A673 (cell line): ENCODE measurements at regions of chr2 and their contacts with region 1.

Region 1: DNA sequence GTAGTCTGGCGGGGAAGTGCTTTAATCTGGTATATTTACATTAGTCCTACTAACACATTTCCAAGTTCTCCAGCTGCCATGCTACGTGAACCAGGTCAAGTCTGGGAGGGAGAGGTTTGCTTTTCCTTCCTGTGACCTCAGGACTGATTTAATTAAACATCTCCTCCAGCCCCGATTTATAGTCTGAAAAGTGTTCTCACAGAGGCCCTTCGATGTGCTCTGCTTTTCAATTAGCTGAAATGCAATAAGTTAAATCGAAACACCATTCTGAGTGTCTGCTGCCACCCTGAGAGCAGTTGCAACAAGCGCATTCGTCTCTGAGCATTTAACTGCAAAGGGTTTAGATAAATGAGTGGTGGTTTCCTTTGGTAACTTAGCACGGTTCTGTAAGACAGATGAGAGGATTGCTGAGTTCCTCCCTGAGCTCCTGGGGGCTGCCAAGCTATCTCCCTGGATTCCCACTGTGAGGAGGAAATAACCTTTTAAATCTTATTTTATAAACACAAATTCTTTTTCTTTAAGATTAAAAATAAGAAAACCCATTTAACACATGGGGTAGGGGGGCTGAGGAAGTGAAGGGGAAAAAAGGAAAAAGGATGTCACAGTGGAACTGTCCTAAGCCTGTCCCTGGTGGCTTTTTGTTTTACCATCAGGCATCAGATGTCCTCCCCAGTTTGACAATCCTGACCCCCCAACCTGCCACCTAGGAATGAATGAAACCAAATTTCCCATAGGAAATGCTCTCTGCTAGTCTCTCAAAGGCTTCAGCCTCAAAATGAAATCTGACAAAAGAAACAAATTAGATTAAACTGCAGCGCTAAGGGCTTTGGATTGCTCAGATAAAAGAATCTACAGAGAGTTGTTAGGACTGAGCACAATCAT is 56.5 kb upstream of the CREB1 start:
- DNase-seq: peak; percentile 93
- H3K4me3 ChIP-seq: no peak overlapping the region
- H3K27ac ChIP-seq: no peak overlapping the region
- H3K4me1 ChIP-seq: peaks cover 21% of the 10 kb centered on the region
- H3K27me3 ChIP-seq: peaks cover 38% of the 10 kb centered on the region
- CTCF ChIP-seq: peak; percentile 77

Region 2: GRCh38 chr2:206556357-206556949 is 916.8 kb before region 1 on chr2:
- CTCF ChIA-PET with region 1: no interaction called
- POLR2A ChIA-PET with region 1: no interaction called
- intact Hi-C with region 1: loop called (anchors 10 kb)
- DNase-seq: peak; percentile 51
- H3K4me3 ChIP-seq: no peak overlapping the region
- H3K27ac ChIP-seq: no peak overlapping the region
- H3K4me1 ChIP-seq: no peaks in the 10 kb centered on the region
- H3K27me3 ChIP-seq: peaks cover 21% of the 10 kb centered on the region
- CTCF ChIP-seq: peak; percentile 73

Region 3: DNA sequence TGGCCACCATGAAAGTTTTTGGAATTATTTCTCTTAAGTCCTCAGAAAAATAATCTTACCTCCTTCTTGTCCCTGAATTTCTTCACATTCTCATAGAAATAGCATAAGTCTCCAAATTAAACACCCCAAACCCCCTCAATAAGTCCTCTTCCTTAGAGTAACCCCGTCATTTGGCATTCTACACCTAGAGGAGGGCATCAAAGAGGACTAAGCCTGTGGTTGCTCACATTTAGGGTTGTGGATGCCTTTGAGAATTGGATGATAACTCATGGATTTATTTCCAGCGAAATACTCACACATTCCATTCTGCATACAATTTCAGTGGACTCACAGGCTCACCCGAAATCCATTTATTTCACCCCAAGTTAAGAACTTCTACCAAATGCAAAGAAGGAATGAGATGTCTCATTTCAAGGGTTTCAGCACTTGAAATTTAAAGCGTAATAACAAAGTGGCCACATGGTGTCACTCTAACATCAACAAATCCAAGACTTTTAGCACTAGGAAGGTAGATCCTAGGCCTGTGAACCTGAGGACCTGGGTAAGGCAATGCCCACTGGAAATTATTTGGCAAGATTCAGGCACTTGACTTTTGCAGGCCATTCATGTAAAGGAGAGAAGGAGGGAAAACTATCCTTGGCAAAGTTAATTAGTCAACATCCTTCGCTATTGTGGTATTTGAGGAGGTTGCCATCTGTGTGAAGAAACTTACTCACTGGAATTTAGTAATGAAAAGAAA is 779.7 kb before region 1 on chr2:
- CTCF ChIA-PET with region 1: no interaction called
- POLR2A ChIA-PET with region 1: no interaction called
- intact Hi-C with region 1: loop called (anchors 1 kb)
- DNase-seq: peak; percentile 69
- H3K4me3 ChIP-seq: no peak overlapping the region
- H3K27ac ChIP-seq: no peak overlapping the region
- H3K4me1 ChIP-seq: no peaks in the 10 kb centered on the region
- H3K27me3 ChIP-seq: peaks cover 22% of the 10 kb centered on the region
- CTCF ChIP-seq: peak; percentile 71

Region 4: DNA sequence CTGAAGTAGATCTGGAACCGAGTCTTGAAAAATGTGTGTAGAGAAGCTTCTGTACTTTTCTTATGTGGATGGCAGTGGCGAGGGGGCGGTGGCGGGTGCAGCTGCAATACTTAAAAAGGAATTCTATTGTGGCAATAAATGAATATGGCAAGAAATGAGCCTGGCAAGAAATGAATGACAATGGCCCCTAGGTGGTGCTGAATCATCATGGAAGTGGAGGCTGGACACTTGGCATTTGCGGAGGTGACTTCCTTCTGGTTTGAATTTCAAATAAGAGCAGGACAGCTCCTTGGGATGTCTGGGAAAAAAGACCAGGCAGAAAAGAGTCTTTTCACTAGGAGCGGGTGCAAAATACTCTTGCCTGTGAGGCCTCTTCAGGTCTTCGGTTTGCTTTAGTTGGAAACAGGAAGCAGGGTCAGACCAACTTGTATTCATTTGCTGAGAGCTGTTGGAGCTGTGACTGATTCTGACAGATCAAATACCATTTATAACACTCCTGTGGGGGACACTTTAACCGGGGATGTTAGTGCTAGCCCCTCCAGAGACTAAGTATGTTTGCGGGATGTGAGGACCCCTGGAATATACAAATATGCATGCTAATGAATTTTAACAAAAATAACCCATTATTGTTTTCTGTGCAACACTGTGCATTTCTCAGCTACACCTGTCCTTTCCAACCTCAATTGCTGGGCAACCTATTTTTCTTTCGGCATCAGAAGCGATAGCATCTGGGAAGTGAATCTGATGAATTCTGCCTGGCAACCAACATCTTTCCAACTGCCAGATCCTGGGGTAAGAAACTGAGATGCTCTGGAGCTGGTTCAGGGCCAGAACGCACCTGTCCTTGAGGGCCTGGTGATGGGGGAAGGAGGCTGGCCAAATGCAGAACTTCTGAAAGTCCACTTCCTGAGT is 672.5 kb before region 1 on chr2:
- CTCF ChIA-PET with region 1: interaction called, 4 read pairs
- POLR2A ChIA-PET with region 1: no interaction called
- intact Hi-C with region 1: loop called (anchors 1 kb)
- DNase-seq: peak; percentile 80
- H3K4me3 ChIP-seq: no peak overlapping the region
- H3K27ac ChIP-seq: no peak overlapping the region
- H3K4me1 ChIP-seq: no peaks in the 10 kb centered on the region
- H3K27me3 ChIP-seq: no peaks in the 10 kb centered on the region
- CTCF ChIP-seq: peak; percentile 74

Region 5: GRCh38 chr2:206981739-206982340 is 491.4 kb before region 1 on chr2:
- CTCF ChIA-PET with region 1: interaction called, 3 read pairs
- POLR2A ChIA-PET with region 1: no interaction called
- intact Hi-C with region 1: loop called (anchors 1 kb)
- DNase-seq: peak; percentile 65
- H3K4me3 ChIP-seq: no peak overlapping the region
- H3K27ac ChIP-seq: no peak overlapping the region
- H3K4me1 ChIP-seq: no peaks in the 10 kb centered on the region
- H3K27me3 ChIP-seq: peaks cover 38% of the 10 kb centered on the region
- CTCF ChIP-seq: peak; percentile 71

Region 6: GRCh38 chr2:207046724-207047123 is 426.6 kb before region 1 on chr2:
- CTCF ChIA-PET with region 1: interaction called, 3 read pairs
- POLR2A ChIA-PET with region 1: no interaction called
- intact Hi-C with region 1: loop called (anchors 2 kb)
- DNase-seq: peak; percentile 88
- H3K4me3 ChIP-seq: no peak overlapping the region
- H3K27ac ChIP-seq: no peak overlapping the region
- H3K4me1 ChIP-seq: peaks cover 12% of the 10 kb centered on the region
- H3K27me3 ChIP-seq: no peaks in the 10 kb centered on the region
- CTCF ChIP-seq: peak; percentile 62

Region 7: DNA sequence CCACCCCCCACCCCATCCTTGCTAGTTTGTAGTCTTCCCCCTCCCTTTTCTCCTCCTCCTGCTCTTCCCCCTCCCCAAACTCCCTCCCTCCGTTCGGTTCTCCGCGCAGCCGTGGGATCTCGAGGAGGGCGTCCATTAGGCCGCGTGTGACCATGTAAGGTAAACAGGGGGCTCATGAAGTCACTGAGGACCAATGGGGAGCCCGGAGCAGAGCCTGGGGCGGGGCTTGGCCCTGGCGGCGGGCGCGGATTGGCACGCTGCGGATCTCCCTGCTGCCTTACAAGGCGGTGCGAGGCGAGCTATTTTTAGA is 307.3 kb before region 1 on chr2:
- CTCF ChIA-PET with region 1: interaction called, 3 read pairs
- POLR2A ChIA-PET with region 1: no interaction called
- intact Hi-C with region 1: loop called (anchors 5 kb)
- DNase-seq: peak; percentile 99
- H3K4me3 ChIP-seq: peak overlapping the region; percentile 83
- H3K27ac ChIP-seq: peak overlapping the region; percentile 100
- H3K4me1 ChIP-seq: peaks cover 20% of the 10 kb centered on the region
- H3K27me3 ChIP-seq: no peaks in the 10 kb centered on the region
- CTCF ChIP-seq: no peak

Region 8: DNA sequence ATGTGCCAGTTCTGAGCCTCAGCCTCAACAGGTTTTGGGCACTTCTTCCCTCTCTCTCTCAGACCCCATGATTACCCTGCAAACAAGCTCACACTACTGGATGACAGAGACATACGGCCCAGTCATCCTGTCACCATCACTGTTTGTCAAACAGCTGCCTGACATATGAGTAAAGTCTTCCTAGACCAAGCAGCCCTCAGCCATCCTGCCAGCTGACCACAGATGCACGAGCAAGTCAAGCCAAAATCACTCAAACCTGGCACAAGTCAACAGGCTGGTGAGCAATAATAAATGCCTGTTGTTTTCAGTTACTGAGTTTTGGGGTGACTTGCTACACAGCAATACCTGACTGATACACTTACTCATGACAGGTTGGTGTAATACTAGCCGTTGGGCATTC is 232.1 kb before region 1 on chr2:
- CTCF ChIA-PET with region 1: no interaction called
- POLR2A ChIA-PET with region 1: no interaction called
- intact Hi-C with region 1: no loop called
- DNase-seq: no peak
- H3K4me3 ChIP-seq: no peak overlapping the region
- H3K27ac ChIP-seq: no peak overlapping the region
- H3K4me1 ChIP-seq: no peaks in the 10 kb centered on the region
- H3K27me3 ChIP-seq: no peaks in the 10 kb centered on the region
- CTCF ChIP-seq: no peak

Region 9: GRCh38 chr2:207408086-207408794 is 65.0 kb before region 1 on chr2:
- CTCF ChIA-PET with region 1: no interaction called
- POLR2A ChIA-PET with region 1: no interaction called
- intact Hi-C with region 1: no loop called
- DNase-seq: no peak
- H3K4me3 ChIP-seq: no peak overlapping the region
- H3K27ac ChIP-seq: no peak overlapping the region
- H3K4me1 ChIP-seq: no peaks in the 10 kb centered on the region
- H3K27me3 ChIP-seq: no peaks in the 10 kb centered on the region
- CTCF ChIP-seq: no peak

Region 10: DNA sequence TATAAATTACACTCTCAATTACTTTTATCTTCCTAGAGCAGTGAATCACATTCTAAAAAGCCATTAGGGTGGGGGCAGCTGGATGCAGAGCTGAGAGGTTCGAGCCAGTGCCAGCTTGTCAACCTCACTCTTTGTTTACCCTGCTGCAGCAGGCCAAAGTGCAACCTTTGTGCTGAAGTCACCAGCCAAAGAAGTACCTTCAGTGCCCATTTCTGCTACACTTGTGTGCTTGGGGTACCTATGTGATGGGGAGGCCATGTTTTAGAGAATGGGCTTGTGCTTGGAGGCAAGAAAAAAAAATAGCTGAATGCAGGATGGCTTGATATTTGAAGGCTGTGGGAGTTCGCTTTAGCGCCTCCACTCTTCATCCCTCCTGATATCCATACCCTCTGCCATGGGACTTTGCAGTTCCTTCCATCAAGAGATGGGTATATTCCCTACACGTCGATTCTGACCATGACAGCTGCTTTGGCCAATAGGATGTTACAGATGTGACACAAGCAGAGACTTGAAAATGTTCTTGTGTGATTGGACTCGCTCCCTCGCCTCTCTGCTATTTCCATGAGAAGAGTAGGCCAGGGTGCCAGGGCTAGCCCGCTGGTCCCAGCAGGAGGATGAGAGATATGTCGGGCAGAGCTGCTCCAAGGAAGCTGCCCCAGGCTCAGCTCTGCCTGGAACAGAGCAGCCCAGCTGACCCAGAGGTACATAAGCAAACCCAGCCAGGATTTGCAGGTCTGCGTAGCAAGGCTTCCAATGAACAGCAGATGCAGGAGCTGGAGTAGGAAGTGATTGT is 309.1 kb after region 1 on chr2:
- CTCF ChIA-PET with region 1: no interaction called
- POLR2A ChIA-PET with region 1: no interaction called
- intact Hi-C with region 1: no loop called
- DNase-seq: no peak
- H3K4me3 ChIP-seq: no peak overlapping the region
- H3K27ac ChIP-seq: no peak overlapping the region
- H3K4me1 ChIP-seq: no peaks in the 10 kb centered on the region
- H3K27me3 ChIP-seq: no peaks in the 10 kb centered on the region
- CTCF ChIP-seq: no peak

Region 11: DNA sequence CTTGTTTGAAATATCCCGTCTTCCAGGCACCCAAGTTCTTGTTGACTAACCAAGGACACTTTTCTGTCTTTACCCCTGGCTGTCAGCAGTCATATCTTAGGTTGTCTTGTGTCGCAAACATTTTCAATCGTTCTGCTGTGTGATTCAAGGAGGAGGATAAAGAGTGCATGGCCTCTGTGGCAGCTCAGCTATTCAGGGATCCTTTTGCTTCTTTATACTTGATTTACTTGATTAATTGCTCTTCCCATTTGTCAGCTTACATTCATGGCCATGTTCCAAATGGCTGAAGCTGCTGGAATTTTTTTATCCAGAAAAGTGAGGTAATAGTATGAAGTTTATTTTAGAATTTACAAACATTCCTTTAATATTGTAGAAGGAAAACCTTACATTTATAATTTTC is 393.8 kb after region 1 on chr2:
- CTCF ChIA-PET with region 1: no interaction called
- POLR2A ChIA-PET with region 1: no interaction called
- intact Hi-C with region 1: no loop called
- DNase-seq: no peak
- H3K4me3 ChIP-seq: no peak overlapping the region
- H3K27ac ChIP-seq: no peak overlapping the region
- H3K4me1 ChIP-seq: no peaks in the 10 kb centered on the region
- H3K27me3 ChIP-seq: no peaks in the 10 kb centered on the region
- CTCF ChIP-seq: no peak